Adrenal gland (tissue), 19 donors: ENCODE measurements at regions of chr17 and their contacts with region 1.

Region 1: DNA sequence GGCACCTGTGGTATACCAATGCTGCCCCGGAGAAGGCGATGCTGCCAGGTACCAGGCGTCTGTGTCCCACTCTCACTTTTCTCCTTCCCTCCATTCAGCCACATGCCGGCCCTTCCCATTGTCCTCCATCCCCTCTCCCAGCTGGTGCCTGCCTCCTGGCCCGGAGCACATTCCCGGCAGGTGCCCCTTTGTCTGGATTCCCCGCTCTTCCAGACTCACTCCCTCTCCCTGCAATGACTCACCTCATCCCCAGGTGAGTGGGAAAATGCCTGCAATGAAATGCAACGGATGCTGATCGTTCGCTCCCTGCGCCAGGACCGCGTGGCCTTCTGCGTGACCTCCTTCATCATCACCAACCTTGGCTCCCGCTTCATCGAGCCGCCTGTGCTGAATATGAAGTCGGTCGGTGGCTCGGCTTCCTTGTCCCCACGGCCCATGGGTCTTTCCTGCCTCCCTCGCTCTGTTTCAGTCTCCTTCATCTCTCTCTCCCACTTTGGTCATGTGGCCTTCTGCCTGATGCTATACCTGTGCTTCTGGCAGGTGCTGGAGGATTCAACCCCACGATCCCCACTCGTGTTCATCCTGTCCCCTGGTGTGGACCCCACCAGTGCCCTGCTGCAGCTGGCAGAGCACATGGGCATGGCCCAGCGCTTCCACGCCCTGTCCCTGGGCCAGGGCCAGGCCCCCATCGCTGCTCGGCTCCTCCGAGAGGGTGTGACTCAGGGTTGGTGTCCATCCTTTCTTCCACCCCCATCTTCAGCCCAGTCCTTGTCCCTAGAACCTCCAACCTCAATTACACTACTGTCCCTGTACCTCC is 10.2 kb upstream of the KDM6B start:
- DNase-seq: no peak
- H3K4me3 ChIP-seq: no peak overlapping the region
- H3K27ac ChIP-seq: no peak overlapping the region
- H3K4me1 ChIP-seq: peaks cover 0 to 10% of the 10 kb centered on the region in 2 donors
- H3K27me3 ChIP-seq: no peaks in the 10 kb centered on the region
- CTCF ChIP-seq: no peak
- POLR2A ChIP-seq: no peak

Region 2: DNA sequence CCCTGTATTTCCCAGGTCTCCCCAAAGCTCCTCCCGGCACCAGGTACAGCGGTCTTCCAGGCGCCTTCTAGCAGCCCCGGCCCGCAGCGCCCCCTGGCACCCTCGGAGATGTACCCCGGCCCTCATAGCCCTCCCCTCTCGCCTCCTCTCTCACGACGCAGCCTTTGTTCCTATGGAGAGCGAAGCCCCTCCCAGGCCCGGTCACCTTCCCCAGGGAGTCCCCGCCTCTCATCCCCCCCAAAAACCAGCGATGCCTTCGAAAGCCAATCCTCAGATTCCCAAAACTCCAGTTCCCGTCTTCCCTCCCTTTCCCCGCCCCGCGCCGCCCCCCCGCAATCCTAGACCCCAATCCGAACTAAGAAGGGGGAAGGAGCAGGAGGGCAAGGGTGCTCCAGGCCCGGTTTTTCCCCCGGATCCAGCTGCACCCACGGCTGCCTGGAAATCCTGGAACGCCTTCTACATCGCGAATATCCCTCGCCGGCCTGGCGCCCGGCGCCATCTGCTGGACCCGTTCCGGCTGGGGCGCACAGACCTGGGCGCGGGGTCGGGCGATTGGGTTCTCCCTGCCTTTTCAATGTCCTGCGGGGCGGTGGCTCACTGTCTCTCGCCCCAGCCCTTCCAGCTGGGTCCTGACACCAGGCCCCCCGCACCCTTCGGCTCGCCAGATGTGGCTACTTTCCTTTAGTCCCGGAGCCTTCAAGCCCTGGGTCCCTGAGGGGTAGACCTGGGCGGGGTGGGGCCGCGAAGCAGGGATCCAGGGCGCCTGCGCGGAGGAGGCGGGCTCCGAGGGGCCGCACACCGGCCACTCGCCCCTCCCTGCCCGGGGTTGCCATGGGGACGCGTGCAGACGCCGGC is 106.7 kb before region 1 on chr17 and contains the start of gene DNAH2:
- intact Hi-C with region 1: no loop called
- DNase-seq: peak; percentile 63 to 88 (median 79)
- H3K4me3 ChIP-seq: peak within 1 kb of the TSS in 2 of 4 donors; percentile 20 to 65
- H3K27ac ChIP-seq: peak within 1 kb of the TSS in 1 of 5 donors; percentile 36
- H3K4me1 ChIP-seq: peaks cover 11 to 14% of the 10 kb centered on the region in 2 donors
- H3K27me3 ChIP-seq: peaks cover 6% of the 10 kb centered on the region
- CTCF ChIP-seq: peak; percentile 20 to 53 (median 43)
- POLR2A ChIP-seq: peak in 1 of 2 donors; percentile 70
- total RNA-seq, gene DNAH2: 0.04 to 0.26 (median 0.11) TPM

Region 3: GRCh38 chr17:7851438-7852256 is 27.9 kb after region 1 on chr17:
- intact Hi-C with region 1: loop called (anchors 2 to 5 kb)
- DNase-seq: peak; percentile 87 to 94 (median 93)
- H3K4me3 ChIP-seq: no peak overlapping the region
- H3K27ac ChIP-seq: peak overlapping the region in 1 of 5 donors; percentile 36
- H3K4me1 ChIP-seq: peaks cover 19 to 38% of the 10 kb centered on the region in 2 donors
- H3K27me3 ChIP-seq: no peaks in the 10 kb centered on the region
- CTCF ChIP-seq: peak; percentile 97 to 99 (median 98)
- POLR2A ChIP-seq: no peak

Region 4: DNA sequence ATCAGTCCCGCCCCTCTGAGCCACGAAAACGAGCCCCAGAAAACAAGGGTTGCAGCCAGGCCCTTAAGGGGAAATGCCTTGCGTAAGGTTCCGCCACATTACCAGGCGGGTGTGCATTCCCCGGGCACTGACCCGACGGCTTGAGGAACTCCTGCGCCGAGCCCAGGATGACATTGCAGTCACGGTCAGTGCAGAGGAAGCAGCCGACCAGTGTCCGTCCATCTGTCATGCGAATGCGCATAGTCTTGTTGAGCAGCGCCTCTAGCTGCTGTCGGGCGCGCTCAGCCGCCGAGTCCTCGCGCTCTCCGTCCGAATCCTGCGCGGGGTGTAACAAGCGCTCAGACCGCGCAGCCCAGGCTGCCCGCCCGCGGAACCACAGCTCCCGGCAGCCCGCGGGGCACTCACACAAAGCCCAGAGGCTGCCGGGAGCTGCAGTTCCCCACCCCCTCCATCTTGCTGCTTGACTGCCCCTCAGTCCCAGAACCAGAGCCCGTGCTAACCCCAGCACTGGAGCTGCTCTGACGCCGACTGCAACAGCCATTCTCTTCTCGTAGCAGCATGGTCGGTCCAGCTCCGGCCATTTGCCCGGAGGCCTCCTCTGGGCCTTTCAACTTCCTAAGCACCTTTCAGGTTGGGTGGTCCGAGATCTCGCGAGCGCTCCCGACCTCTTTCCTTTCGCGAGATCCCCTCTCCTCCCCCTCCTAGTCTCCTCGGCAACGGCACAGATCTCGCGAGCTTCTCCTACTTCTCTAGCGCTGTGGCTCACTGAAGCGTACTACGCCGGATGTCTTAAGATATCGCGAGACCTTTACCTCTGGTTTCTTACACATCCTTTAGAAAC is 33.3 kb after region 1 on chr17 and contains the start of gene NAA38:
- intact Hi-C with region 1: loop called (anchors 2 to 5 kb)
- DNase-seq: peak; percentile 96 to 99 (median 98)
- H3K4me3 ChIP-seq: peak within 1 kb of the TSS; percentile 5 to 58 (median 32)
- H3K27ac ChIP-seq: peak within 1 kb of the TSS; percentile 75 to 91 (median 88)
- H3K4me1 ChIP-seq: peaks cover 23 to 35% of the 10 kb centered on the region in 2 donors
- H3K27me3 ChIP-seq: no peaks in the 10 kb centered on the region
- CTCF ChIP-seq: peak in 5 of 6 experiments; percentile 29 to 46 (median 42)
- POLR2A ChIP-seq: peak; percentile 40 to 82
- total RNA-seq, gene NAA38: 96.2 to 281 (median 124) TPM

Region 5: DNA sequence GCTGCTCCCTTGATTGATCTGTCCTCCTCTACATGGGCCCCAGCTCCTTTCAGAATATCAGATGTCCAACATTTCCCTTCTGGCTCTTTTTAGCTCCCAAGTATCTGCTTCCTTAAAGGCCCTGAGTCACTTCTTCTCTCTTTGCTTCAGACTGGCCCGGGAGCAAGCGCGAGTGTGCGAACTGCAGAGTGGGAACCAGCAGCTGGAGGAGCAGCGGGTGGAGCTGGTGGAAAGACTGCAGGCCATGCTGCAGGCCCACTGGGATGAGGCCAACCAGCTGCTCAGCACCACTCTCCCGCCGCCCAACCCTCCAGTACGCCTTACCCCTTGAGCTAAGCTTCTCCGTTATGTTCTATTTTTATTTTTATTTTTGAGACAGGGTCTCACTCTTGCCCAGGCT is 120.5 kb after region 1 on chr17:
- intact Hi-C with region 1: no loop called
- DNase-seq: no peak
- H3K4me3 ChIP-seq: no peak overlapping the region
- H3K27ac ChIP-seq: no peak overlapping the region
- H3K4me1 ChIP-seq: no peaks in the 10 kb centered on the region
- H3K27me3 ChIP-seq: no peaks in the 10 kb centered on the region
- CTCF ChIP-seq: no peak
- POLR2A ChIP-seq: no peak

Region 6: GRCh38 chr17:7972131-7972785 is 148.5 kb after region 1 on chr17:
- intact Hi-C with region 1: no loop called
- DNase-seq: no peak
- H3K4me3 ChIP-seq: no peak overlapping the region
- H3K27ac ChIP-seq: no peak overlapping the region
- H3K4me1 ChIP-seq: no peaks in the 10 kb centered on the region
- H3K27me3 ChIP-seq: no peaks in the 10 kb centered on the region
- CTCF ChIP-seq: peak in 2 of 6 experiments; percentile 9 to 22
- POLR2A ChIP-seq: no peak